Dorsolateral prefrontal cortex (tissue), 120 donors: ENCODE measurements at regions of chr19 and their contacts with region 1.

Region 1: DNA sequence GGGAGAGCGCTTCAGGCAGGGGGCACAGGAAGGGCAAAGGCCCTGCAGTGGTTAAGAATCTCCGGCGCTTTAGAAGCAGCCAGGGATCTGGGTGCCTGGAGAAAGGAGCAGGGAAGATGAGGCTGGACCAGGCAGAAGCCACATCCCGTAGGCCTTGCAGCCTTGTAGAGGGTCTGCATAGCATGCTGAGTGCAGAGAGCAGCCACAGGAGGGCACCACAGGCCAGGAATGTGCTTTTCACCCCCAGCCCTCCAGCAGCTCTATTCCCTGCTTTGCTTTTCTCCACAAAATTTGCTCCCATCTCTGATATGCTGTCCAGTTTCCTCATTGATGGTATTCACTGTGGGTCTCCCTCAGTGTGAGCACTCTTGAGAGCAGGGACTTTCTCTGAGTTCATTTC is 5.7 kb downstream of the WDR62 start:
- DNase-seq: peak; percentile 33 to 85 (median 81)
- H3K4me3 ChIP-seq: peak overlapping the region in 1 of 59 donors; percentile 27
- H3K27ac ChIP-seq: peak overlapping the region in 56 of 59 donors; percentile 10 to 89 (median 73)
- H3K27me3 ChIP-seq: no peaks in the 10 kb centered on the region
- CTCF ChIP-seq: peak; percentile 36 to 93 (median 76)

Region 2: DNA sequence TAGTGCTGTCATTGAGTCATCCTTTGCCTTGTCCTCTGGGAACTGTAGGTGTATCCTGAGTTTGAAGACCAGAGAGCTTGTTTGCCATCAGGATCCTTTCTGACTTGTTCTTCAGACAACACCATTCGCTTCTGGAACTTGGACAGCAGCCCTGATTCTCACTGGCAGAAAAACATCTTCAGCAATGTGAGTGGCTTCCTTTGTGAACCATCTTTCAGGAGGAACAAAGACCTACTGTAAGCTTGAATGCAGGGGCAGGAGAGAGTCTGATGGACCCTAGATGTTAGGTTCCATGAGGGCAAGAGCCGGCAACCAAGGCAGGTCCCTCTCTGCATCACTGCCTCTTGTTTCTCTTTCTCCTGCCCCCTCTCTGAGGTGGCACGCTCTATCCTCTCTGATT is 21.0 kb after region 1 on chr19:
- intact Hi-C with region 1: loop called in 1 of 2 experiments (anchors 2 kb)
- DNase-seq: peak in 7 of 10 donors; percentile 53 to 88 (median 69)
- H3K4me3 ChIP-seq: peak overlapping the region in 3 of 59 donors; percentile 2 to 24 (median 12)
- H3K27ac ChIP-seq: peak overlapping the region; percentile 0 to 94 (median 83)
- H3K27me3 ChIP-seq: no peaks in the 10 kb centered on the region
- CTCF ChIP-seq: peak in 1 of 56 donors; percentile 22

Region 3: DNA sequence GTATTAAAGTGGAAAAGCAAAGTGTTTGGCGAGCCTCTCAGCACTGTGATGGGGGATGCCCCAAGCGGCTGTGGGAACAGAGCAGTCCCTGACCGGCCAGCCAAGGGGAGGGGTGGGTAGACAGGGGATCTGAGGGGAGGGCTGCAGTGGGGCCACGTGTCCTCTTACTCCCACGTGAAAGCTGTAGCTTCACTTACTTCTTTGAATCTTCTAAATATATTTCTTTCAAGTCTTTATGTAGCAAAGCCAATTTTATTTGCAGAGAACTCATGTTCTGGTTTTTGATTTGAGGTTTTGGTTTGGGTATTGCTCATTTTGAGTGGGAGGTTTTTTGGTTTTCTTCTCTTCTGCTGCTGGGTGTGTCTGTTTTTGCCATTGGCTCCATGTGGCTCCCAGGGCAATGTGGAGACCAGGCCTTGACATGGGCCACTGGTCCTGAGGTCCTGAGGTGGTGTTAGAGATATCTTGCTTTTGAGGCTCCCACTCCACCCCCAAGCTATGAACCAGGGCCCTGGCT is 32.8 kb after region 1 on chr19:
- intact Hi-C with region 1: loop called in 1 of 2 experiments (anchors 2 kb)
- DNase-seq: no peak
- H3K4me3 ChIP-seq: no peak overlapping the region
- H3K27ac ChIP-seq: peak overlapping the region; percentile 36 to 98 (median 87)
- H3K27me3 ChIP-seq: no peaks in the 10 kb centered on the region
- CTCF ChIP-seq: no peak

Region 4: DNA sequence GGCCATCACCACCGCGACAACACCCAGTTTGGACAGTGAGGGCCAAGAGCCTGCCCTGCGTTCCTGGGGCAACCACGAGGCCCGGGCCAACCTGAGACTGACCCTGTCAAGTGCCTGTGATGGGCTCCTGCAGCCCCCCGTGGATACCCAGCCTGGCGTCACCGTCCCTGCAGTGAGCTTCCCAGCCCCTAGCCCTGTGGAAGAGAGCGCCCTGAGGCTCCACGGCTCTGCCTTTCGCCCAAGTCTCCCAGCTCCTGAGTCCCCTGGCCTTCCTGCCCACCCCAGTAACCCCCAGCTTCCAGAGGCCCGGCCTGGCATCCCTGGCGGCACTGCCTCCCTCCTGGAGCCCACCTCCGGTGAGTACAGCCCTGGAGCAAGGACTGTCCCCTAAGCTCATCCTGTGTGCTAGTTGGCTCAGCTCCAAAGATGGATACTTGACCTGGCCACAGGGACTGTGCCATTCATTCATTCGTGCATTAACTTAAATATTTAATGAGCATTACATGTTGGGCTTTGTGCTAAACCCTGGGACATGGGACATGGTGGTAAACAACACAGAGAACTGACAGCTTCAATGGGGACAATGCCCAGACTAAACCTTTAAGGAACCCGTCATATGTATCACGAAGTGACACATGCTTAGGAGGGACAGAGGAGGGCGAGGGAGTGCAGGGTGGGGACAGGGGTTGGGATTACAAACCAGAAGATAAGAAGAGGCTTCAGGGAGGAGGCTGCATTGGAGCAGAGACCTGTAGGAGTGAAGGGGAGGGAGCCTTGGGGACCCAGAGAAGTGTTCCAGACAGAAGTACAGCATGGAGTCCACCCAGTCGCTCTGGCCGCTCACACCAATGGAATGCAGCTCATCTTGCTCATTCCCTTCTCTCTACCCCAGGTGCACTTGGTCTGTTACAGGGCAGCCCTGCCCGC is 43.5 kb after region 1 on chr19:
- intact Hi-C with region 1: no loop called
- DNase-seq: no peak
- H3K4me3 ChIP-seq: no peak overlapping the region
- H3K27ac ChIP-seq: peak overlapping the region in 2 of 59 donors; percentile 3 to 31
- H3K27me3 ChIP-seq: no peaks in the 10 kb centered on the region
- CTCF ChIP-seq: no peak

Region 5: DNA sequence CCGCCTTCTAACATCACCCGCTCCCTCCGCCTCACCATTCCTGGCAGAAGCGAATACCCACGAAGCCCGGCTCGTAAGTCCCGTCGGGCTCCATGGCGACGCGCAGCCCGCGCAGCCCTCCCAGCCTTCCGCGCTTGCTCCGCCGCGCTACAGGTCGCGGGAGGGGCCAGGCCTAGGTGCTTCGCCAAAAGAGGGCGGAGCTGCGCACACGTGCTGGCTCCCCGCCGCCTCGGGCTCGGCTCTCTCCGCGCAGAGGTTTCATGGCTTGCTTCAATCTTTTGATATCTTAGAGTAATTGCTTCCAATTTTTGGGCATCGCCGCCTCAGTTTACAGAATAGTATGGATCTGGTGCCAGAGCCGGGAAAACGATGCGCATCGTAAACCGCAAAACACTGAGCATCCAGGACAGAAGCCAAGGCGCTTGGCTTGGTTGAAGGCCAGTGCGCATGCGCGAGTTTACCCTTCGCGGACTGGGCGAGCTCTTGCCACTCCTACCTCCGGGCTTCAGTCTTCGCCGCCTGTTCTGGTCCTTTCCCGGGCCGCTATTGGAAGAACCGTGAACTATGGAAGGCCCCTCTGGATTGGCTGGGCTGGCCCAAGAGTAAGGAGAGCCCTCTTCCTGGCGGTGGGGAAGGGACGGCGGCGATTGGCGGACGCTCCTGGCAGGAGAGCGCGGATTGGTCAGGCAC is 54.5 kb after region 1 on chr19 and contains the start of gene POLR2I:
- intact Hi-C with region 1: loop called in 1 of 2 experiments (anchors 1 kb)
- DNase-seq: peak; percentile 97 to 100 (median 100)
- H3K4me3 ChIP-seq: peak within 1 kb of the TSS; percentile 61 to 98 (median 92)
- H3K27ac ChIP-seq: peak within 1 kb of the TSS; percentile 75 to 99 (median 95)
- H3K27me3 ChIP-seq: no peaks in the 10 kb centered on the region
- CTCF ChIP-seq: peak in 20 of 56 donors; percentile 1 to 60 (median 20)
- total RNA-seq, gene POLR2I: 61.9 to 165 (median 106) TPM

Region 6: GRCh38 chr19:36132489-36132891 is 72.1 kb after region 1 on chr19:
- intact Hi-C with region 1: loop called in 1 of 2 experiments (anchors 2 kb)
- DNase-seq: no peak
- H3K4me3 ChIP-seq: no peak overlapping the region
- H3K27ac ChIP-seq: no peak overlapping the region
- H3K27me3 ChIP-seq: no peaks in the 10 kb centered on the region
- CTCF ChIP-seq: no peak

Region 7: GRCh38 chr19:36169084-36169760 is 108.8 kb after region 1 on chr19:
- intact Hi-C with region 1: loop called (anchors 1 to 2 kb)
- DNase-seq: no peak
- H3K4me3 ChIP-seq: no peak overlapping the region
- H3K27ac ChIP-seq: peak overlapping the region in 14 of 59 donors; percentile 6 to 63 (median 38)
- H3K27me3 ChIP-seq: no peaks in the 10 kb centered on the region
- CTCF ChIP-seq: no peak